GM10248 (cell line): ENCODE measurements at regions of chr6 and their contacts with region 1.

Region 1: DNA sequence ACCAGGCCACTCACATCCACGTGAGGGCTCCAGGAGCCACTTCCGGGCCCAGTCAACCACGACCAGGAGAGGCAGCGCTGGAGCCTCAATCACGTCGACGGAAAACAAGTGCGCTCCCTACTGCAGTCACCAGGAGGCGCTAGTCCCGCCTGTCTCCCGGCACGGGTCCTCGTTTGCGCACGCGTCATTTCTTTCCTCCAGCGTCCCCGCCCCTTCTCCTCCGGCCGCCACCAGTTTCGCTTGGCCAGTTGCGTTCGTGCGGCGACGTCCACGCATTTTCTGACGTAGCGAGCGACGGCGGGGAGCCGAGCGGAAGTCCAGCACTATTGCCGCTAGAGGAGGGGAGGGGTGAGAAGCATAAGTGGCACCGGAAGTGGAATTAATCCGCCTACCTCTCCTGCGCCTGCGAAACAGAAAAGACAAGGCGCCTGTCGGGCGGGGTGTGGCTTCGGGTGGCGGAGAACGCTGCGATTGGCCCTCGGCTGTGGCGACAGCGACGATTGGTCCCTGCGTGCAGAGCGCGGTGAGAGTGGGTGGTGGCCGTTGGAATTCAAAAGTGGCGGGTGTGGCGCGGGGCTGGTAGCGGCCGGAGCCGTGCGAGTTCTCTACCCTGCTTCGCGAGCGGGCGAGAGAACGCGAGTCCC is at the start of gene KIFC1:
- DNase-seq: peak; percentile 97
- CTCF ChIP-seq: peak; percentile 91

Region 2: DNA sequence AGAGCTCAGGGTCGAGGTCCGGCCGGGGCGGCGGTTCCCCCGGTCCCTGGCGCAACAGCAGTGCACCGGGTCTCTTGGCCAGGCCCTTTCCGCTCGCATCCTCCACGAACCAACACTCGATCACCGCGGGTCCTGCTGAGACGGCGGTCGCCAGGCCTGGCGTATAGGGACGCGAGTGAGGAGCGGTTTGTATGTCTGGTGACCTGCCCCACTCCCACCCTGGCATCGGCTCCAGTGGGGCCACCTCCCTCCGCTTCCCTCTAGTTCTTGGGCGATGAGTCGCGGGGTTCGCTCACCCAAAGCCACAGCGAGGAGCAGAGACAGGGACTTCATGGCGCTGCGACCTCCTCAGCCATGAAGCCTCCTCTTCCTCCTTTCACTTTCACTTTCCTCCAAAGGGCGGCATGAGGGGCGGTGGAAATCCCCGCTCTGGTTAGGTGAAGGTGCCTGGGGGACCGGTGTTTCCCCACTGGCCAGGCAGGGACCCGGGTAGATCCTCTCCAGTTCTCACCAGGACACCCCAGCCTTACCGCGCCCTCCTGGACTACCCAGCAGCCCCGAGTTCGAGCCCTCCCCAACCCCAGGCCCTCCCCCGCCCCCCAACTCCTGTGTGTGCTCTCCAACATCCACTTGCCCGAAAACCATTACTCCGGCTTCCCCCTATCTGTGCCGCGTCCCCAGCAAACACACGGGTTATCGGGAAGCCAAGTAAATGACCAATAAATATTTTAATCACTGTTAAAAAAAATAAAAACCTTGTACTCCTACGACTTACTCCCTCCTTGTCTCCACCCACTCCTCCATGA is 77.5 kb before region 1 on chr6 and contains the start of gene TAPBP:
- CTCF ChIA-PET with region 1: no interaction called
- POLR2A ChIA-PET with region 1: no interaction called
- DNase-seq: peak; percentile 90
- CTCF ChIP-seq: no peak

Region 3: DNA sequence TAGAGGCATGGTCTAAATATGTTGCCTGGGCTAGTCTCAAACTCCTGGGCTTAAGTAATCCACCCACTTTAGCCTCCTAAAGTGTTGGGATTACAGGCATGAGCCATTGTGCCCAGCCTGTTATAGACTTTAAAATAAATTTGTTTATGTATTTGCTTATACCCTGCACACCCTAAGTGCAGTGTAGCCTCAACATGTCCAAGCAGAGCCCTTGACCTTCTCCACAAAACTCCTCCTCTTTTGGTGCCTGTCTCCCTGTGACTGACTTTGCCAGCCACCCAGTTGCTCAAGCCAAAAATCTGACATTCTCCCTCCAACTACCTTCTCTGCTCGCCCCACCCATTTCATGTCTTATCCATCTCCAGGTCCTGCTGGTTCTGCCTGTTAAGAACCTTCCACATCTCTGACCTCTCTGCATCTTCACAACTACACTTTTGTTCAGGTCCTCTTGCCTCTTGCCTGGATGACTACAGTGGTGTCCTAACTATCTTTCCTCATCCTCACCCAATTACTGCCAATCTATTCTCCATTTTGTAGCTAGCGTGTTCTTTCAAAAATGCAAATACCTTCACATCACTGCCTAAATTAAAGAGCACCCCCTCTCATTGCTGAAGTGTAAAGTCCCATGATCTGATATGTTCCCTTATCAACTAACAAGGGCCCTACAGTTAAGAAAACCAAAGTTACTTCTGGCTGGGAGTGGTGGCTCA is 11.0 kb before region 1 on chr6:
- CTCF ChIA-PET with region 1: interaction called, 10 read pairs
- POLR2A ChIA-PET with region 1: no interaction called
- DNase-seq: no peak
- CTCF ChIP-seq: no peak

Region 4: DNA sequence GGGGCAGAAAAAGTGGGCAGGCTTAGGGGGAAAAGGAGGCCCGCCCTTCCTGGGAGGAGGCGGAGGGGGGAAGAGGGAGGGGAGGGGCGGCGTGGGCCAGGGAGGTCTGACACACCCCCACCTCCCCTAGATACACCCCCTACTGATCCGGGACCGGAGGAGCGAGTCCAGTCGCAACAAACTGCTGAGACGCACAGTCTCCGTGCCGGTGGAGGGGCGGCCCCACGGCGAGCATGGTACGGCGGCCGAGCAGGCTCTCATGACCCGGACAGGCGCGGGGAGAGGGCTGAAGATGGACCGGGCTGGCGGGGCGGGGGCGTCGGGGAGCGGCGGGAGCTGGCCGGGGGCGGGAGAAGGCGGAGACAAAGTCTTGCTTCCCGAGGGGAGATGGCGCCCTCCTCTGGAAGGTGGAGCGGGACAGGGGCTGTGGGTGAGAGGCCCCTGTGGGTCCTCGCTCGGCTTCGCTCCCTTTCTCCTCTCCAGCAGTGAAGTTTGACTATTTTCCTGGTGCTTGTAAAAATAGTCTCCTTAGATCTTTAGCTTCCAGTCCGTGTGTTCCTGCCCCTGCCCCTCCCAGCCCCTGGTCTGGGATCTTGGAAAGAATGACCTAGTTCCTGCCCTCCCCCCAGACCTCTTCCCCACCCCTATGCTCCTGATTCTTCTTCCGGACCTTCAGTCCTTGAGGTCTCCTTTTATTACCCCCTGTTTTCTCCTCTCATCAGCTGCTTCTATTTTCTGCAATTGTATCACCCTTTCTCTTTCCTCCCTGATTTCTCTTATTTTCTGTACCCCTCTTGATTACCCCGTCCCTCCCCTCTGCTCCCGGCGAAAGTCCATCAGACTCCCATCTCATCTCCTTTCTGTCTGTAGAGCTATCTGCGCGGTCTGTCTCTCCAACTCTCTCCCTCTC is 34.5 kb after region 1 on chr6:
- CTCF ChIA-PET with region 1: interaction called, 11 read pairs
- POLR2A ChIA-PET with region 1: no interaction called
- DNase-seq: peak; percentile 86
- CTCF ChIP-seq: peak; percentile 88